GM12878 (cell line): ENCODE measurements at regions of chr4 and their contacts with region 1.

Region 1: GRCh38 chr4:48269861-48270522 is 354 bp upstream of the TEC start:
- DNase-seq: peak; percentile 74
- ATAC-seq: peak; percentile 89
- H3K4me3 ChIP-seq: peak overlapping the region; percentile 65
- H3K27ac ChIP-seq: peak overlapping the region; percentile 88
- H3K4me1 ChIP-seq: peaks cover 18% of the 10 kb centered on the region
- H3K27me3 ChIP-seq: no peaks in the 10 kb centered on the region
- CTCF ChIP-seq: peak in 2 of 3 experiments; percentile 16 to 31; a peak in 2 of 6 replicates
- EP300 ChIP-seq: peak in 1 of 2 experiments; percentile 40; a peak in 1 of 4 replicates
- POLR2A ChIP-seq: peak; percentile 76
- RAD21 ChIP-seq: peak; percentile 42

Region 2: GRCh38 chr4:47485047-47485692 is 784.8 kb before region 1 on chr4 and contains the start of gene ATP10D:
- CTCF ChIA-PET with region 1: no interaction called
- POLR2A ChIA-PET with region 1: no interaction called
- RAD21 ChIA-PET with region 1: no interaction called
- SMC1A ChIA-PET with region 1: no interaction called
- in situ Hi-C with region 1: no loop called
- intact Hi-C with region 1: loop called (anchors 5 kb)
- DNase-seq: peak; percentile 71
- ATAC-seq: peak; percentile 91
- H3K4me3 ChIP-seq: peak within 1 kb of the TSS; percentile 81
- H3K27ac ChIP-seq: peak within 1 kb of the TSS; percentile 70
- H3K4me1 ChIP-seq: peaks cover 17% of the 10 kb centered on the region
- H3K27me3 ChIP-seq: no peaks in the 10 kb centered on the region
- CTCF ChIP-seq: no peak; a peak in 1 of 6 replicates
- EP300 ChIP-seq: peak in 1 of 2 experiments; percentile 42; a peak in 1 of 4 replicates
- POLR2A ChIP-seq: peak; percentile 91
- RAD21 ChIP-seq: peak; percentile 34; the same call in 1 of the 2 replicates
- polyA plus RNA-seq, gene ATP10D: 10.2 to 18.0 TPM

Region 3: GRCh38 chr4:47990145-47990544 is 279.8 kb before region 1 on chr4:
- CTCF ChIA-PET with region 1: no interaction called
- POLR2A ChIA-PET with region 1: no interaction called
- RAD21 ChIA-PET with region 1: no interaction called
- SMC1A ChIA-PET with region 1: no interaction called
- in situ Hi-C with region 1: no loop called
- intact Hi-C with region 1: no loop called
- DNase-seq: no peak
- ATAC-seq: no peak
- H3K4me3 ChIP-seq: no peak overlapping the region
- H3K27ac ChIP-seq: no peak overlapping the region
- H3K4me1 ChIP-seq: no peaks in the 10 kb centered on the region
- H3K27me3 ChIP-seq: no peaks in the 10 kb centered on the region
- CTCF ChIP-seq: no peak
- EP300 ChIP-seq: no peak
- POLR2A ChIP-seq: no peak
- RAD21 ChIP-seq: no peak

Region 4: DNA sequence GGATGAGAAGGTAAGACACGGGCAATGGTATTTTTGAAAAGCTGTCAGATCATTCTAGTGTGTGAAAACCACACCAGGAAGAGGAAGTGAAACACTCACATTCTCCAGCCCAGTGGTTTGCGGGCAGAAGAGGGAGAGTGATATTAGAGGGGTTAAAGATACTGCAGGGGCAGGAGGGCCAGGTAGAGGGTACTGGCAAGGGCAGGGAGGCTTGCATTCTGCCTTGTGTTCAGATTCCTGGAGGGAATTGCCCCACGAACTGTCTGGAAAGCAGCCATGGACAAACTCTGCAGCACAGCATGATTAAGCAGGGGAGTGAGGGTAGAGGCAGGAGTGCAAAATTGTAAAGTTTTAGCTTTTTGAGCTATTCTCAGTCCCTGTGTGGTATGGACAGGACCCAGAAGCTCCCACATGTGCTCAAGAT is 222.6 kb before region 1 on chr4:
- CTCF ChIA-PET with region 1: interaction called, 3 read pairs
- POLR2A ChIA-PET with region 1: interaction called, 3 read pairs
- RAD21 ChIA-PET with region 1: interaction called, 4 read pairs
- SMC1A ChIA-PET with region 1: no interaction called
- in situ Hi-C with region 1: no loop called
- intact Hi-C with region 1: loop called (anchors 5 kb)
- DNase-seq: peak; percentile 84
- ATAC-seq: peak; percentile 95
- H3K4me3 ChIP-seq: peak overlapping the region; percentile 18; the same call in 1 of the 2 replicates
- H3K27ac ChIP-seq: peak overlapping the region; percentile 71
- H3K4me1 ChIP-seq: peaks cover 72% of the 10 kb centered on the region
- H3K27me3 ChIP-seq: no peaks in the 10 kb centered on the region; a peak in 1 of 4 replicates
- CTCF ChIP-seq: no peak
- EP300 ChIP-seq: peak; percentile 94 to 98
- POLR2A ChIP-seq: no peak
- RAD21 ChIP-seq: peak; percentile 36; the same call in 1 of the 2 replicates

Region 5: GRCh38 chr4:48141048-48141447 is 128.9 kb before region 1 on chr4:
- CTCF ChIA-PET with region 1: interaction called, 21 read pairs
- POLR2A ChIA-PET with region 1: interaction called, 4 read pairs
- RAD21 ChIA-PET with region 1: interaction called, 19 read pairs
- SMC1A ChIA-PET with region 1: interaction called, 28 read pairs
- in situ Hi-C with region 1: no loop called
- intact Hi-C with region 1: no loop called
- DNase-seq: no peak
- ATAC-seq: peak; percentile 75
- H3K4me3 ChIP-seq: no peak overlapping the region
- H3K27ac ChIP-seq: no peak overlapping the region
- H3K4me1 ChIP-seq: peaks cover 17% of the 10 kb centered on the region
- H3K27me3 ChIP-seq: no peaks in the 10 kb centered on the region
- CTCF ChIP-seq: peak; percentile 21 to 55 (median 49); a peak in 4 of 6 replicates
- EP300 ChIP-seq: no peak
- POLR2A ChIP-seq: no peak
- RAD21 ChIP-seq: peak; percentile 37; the same call in 1 of the 2 replicates

Region 6: GRCh38 chr4:48203819-48204218 is 66.2 kb before region 1 on chr4:
- CTCF ChIA-PET with region 1: interaction called, 25 read pairs
- POLR2A ChIA-PET with region 1: interaction called, 12 read pairs
- RAD21 ChIA-PET with region 1: interaction called, 21 read pairs
- SMC1A ChIA-PET with region 1: interaction called, 26 read pairs
- in situ Hi-C with region 1: no loop called
- intact Hi-C with region 1: no loop called
- DNase-seq: no peak
- ATAC-seq: peak; percentile 48
- H3K4me3 ChIP-seq: peak overlapping the region; percentile 33; the same call in 1 of the 2 replicates
- H3K27ac ChIP-seq: peak overlapping the region; percentile 84
- H3K4me1 ChIP-seq: peaks cover 73% of the 10 kb centered on the region
- H3K27me3 ChIP-seq: no peaks in the 10 kb centered on the region
- CTCF ChIP-seq: no peak
- EP300 ChIP-seq: peak in 1 of 2 experiments; percentile 19; a peak in 1 of 4 replicates
- POLR2A ChIP-seq: no peak; the same call in 1 of the 2 replicates
- RAD21 ChIP-seq: no peak

Region 7: GRCh38 chr4:48247142-48247877 is 22.7 kb before region 1 on chr4:
- CTCF ChIA-PET with region 1: interaction called, 3 read pairs
- POLR2A ChIA-PET with region 1: interaction called, 5 read pairs
- RAD21 ChIA-PET with region 1: interaction called, 8 read pairs
- SMC1A ChIA-PET with region 1: interaction called, 15 read pairs
- in situ Hi-C with region 1: no loop called
- intact Hi-C with region 1: loop called (anchors 2 kb)
- DNase-seq: peak; percentile 51
- ATAC-seq: peak; percentile 74
- H3K4me3 ChIP-seq: 0 out of 2 replicates have a peak overlapping the region, but pooled peaks have one; percentile 25
- H3K27ac ChIP-seq: peak overlapping the region; percentile 79
- H3K4me1 ChIP-seq: peaks cover 28% of the 10 kb centered on the region
- H3K27me3 ChIP-seq: no peaks in the 10 kb centered on the region
- CTCF ChIP-seq: no peak
- EP300 ChIP-seq: no peak
- POLR2A ChIP-seq: no peak
- RAD21 ChIP-seq: no peak